Activated T-helper 2 cell treated with anti-CD3 and anti-CD28 coated beads, Interferon-gamma antibody, Interleukin-2, Interleukin-4, amounts not matched to agents 10 μg/mL and 5 μg/mL and 100 μg/mL, durations not matched to agents 14 hours and 24 hours and 36 hours (primary cell): ENCODE measurements at regions of chr3 and their contacts with region 1.

Region 1: DNA sequence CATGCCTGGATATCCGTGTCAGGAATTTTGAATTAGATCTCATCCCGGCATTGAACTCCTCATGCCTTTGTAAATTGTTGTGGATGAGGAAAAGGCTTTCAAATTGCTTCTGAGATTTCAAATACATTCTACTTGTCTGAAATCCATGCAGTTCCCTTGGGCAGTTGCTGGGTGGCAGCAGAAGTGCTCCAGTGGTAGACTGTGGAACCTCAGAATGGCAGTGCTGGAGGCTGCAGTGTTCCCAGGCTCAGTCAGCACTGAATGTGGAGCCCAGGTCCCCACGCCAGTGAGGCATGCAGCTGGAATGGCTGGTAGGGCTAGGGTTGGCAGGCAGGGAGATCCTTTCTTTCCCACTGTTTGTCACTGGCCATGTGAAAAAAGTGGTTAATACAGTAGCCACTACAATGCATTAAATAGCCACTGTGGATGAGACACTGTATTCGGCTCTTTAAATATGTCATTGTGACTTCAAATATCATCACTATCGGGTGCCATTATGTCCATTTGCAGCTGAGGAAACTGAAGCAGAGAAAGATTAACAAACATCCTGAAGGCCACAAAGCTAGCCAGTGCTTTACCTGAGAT is 98.6 kb downstream of the TPRG1 start:
- DNase-seq: peak; percentile 33
- H3K4me3 Mint-ChIP-seq: no peak overlapping the region
- H3K27ac Mint-ChIP-seq: no peak overlapping the region
- H3K4me1 Mint-ChIP-seq: peaks cover 33% of the 10 kb centered on the region
- H3K27me3 Mint-ChIP-seq: no peaks in the 10 kb centered on the region

Region 2: GRCh38 chr3:189172668-189173419 is 97.5 kb before region 1 on chr3:
- intact Hi-C with region 1: no loop called
- DNase-seq: no peak
- H3K4me3 Mint-ChIP-seq: no peak overlapping the region
- H3K27ac Mint-ChIP-seq: no peak overlapping the region
- H3K4me1 Mint-ChIP-seq: peaks cover 8% of the 10 kb centered on the region
- H3K27me3 Mint-ChIP-seq: peaks cover 11% of the 10 kb centered on the region

Region 3: GRCh38 chr3:189394599-189395121 is 124.3 kb after region 1 on chr3:
- intact Hi-C with region 1: loop called (anchors 5 kb)
- DNase-seq: no peak
- H3K4me3 Mint-ChIP-seq: peak overlapping the region; percentile 6
- H3K27ac Mint-ChIP-seq: peak overlapping the region; percentile 84
- H3K4me1 Mint-ChIP-seq: peaks cover 40% of the 10 kb centered on the region
- H3K27me3 Mint-ChIP-seq: no peaks in the 10 kb centered on the region

Region 4: GRCh38 chr3:189419038-189419437 is 148.7 kb after region 1 on chr3:
- intact Hi-C with region 1: loop called (anchors 5 kb)
- DNase-seq: no peak
- H3K4me3 Mint-ChIP-seq: no peak overlapping the region
- H3K27ac Mint-ChIP-seq: no peak overlapping the region
- H3K4me1 Mint-ChIP-seq: peaks cover 37% of the 10 kb centered on the region
- H3K27me3 Mint-ChIP-seq: no peaks in the 10 kb centered on the region

Region 5: GRCh38 chr3:189563866-189564563 is 293.7 kb after region 1 on chr3:
- intact Hi-C with region 1: loop called (anchors 5 kb)
- DNase-seq: peak; percentile 54
- H3K4me3 Mint-ChIP-seq: peak overlapping the region; percentile 0
- H3K27ac Mint-ChIP-seq: peak overlapping the region; percentile 19
- H3K4me1 Mint-ChIP-seq: peaks cover 55% of the 10 kb centered on the region
- H3K27me3 Mint-ChIP-seq: no peaks in the 10 kb centered on the region

Region 6: DNA sequence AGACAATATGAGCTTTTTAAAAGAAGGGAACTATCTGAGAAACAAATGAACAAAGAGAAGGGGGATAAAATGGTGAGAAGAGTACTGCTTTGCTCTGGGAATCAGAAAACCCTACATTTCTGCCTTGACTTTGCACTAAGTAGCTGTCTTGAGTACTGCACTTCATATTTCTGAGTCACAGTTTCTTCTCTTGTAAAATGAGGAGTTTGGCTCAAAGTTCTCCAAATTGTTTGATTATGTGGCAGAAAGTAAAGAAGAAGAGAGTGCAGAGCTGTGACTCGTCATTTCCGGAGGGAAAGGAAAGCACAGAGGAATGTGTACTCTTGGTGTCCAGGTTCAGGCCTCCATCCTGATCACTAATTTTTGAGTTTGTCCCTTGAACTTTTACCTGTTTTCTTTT is 415.5 kb after region 1 on chr3:
- intact Hi-C with region 1: loop called (anchors 10 kb)
- DNase-seq: no peak
- H3K4me3 Mint-ChIP-seq: no peak overlapping the region
- H3K27ac Mint-ChIP-seq: peak overlapping the region; percentile 51
- H3K4me1 Mint-ChIP-seq: peaks cover 43% of the 10 kb centered on the region
- H3K27me3 Mint-ChIP-seq: no peaks in the 10 kb centered on the region

Region 7: DNA sequence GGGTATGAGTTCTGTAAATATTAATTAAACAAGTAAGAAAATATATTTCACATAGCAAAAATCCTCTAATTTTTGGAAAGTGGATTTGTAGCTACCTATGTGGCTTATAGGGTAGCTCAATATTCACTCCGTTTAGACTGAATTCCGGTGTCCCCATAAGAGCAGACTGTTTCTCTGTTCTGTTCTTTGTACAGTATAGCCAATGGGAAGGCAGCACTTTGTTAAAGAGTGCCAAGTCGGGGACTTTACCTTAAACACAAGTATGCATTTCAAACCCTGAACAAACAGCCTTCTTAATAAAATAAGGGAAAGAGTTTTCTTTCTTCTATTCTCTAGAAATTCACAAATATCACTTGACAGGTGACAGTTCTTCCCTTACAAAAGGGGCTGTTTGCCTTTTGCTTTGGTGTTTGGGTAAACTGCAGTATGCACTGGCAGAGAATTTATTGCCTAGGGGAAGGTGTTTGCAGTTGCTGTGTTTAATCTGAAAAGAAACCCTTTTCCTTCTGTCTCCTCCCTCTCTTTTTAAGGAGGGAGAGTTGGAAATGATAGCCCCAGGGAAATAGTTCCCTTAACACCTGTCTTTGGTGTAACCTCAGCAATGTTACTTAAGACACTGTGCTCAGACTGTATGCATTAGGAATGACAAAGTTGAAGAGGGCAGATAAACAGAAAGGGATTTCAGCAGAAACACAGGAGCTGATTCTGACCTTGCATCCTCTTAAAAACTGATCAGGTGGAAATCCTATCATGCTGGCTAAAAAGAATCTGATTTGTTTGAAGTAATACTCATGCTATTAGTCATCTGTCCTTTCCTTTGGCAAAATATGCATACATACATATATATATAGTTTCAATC is 486.1 kb after region 1 on chr3:
- intact Hi-C with region 1: no loop called
- DNase-seq: no peak
- H3K4me3 Mint-ChIP-seq: no peak overlapping the region
- H3K27ac Mint-ChIP-seq: no peak overlapping the region
- H3K4me1 Mint-ChIP-seq: no peaks in the 10 kb centered on the region
- H3K27me3 Mint-ChIP-seq: no peaks in the 10 kb centered on the region

Region 8: GRCh38 chr3:189773041-189773451 is 502.7 kb after region 1 on chr3:
- intact Hi-C with region 1: loop called (anchors 10 kb)
- DNase-seq: no peak
- H3K4me3 Mint-ChIP-seq: no peak overlapping the region
- H3K27ac Mint-ChIP-seq: no peak overlapping the region
- H3K4me1 Mint-ChIP-seq: peaks cover 5% of the 10 kb centered on the region
- H3K27me3 Mint-ChIP-seq: peaks cover 5% of the 10 kb centered on the region

Region 9: GRCh38 chr3:189947948-189948723 is 677.8 kb after region 1 on chr3:
- intact Hi-C with region 1: loop called (anchors 1 kb)
- DNase-seq: no peak
- H3K4me3 Mint-ChIP-seq: no peak overlapping the region
- H3K27ac Mint-ChIP-seq: no peak overlapping the region
- H3K4me1 Mint-ChIP-seq: peaks cover 18% of the 10 kb centered on the region
- H3K27me3 Mint-ChIP-seq: peaks cover 10% of the 10 kb centered on the region